ENCODE measurements at regions of chr11 and their contacts with region 1.

Region 1: GRCh38 chr11:68297812-68298658 is 14.4 kb upstream of the LRP5 start:
- DNase-seq: peak; percentile 78
- H3K4me3 Mint-ChIP-seq: no peak overlapping the region
- H3K27ac Mint-ChIP-seq: no peak overlapping the region
- H3K4me1 Mint-ChIP-seq: peaks cover 3% of the 10 kb centered on the region
- H3K27me3 Mint-ChIP-seq: peaks cover 6% of the 10 kb centered on the region

Region 2: GRCh38 chr11:68211546-68211945 is 86.5 kb before region 1 on chr11:
- CTCF ChIA-PET with region 1: interaction called, 28 read pairs
- POLR2A ChIA-PET with region 1: no interaction called
- DNase-seq: no peak
- H3K4me3 Mint-ChIP-seq: peak overlapping the region; percentile 88
- H3K27ac Mint-ChIP-seq: no peak overlapping the region
- H3K4me1 Mint-ChIP-seq: peaks cover 40% of the 10 kb centered on the region
- H3K27me3 Mint-ChIP-seq: peaks cover 18% of the 10 kb centered on the region

Region 3: GRCh38 chr11:68251765-68252164 is 46.3 kb before region 1 on chr11:
- CTCF ChIA-PET with region 1: interaction called, 117 read pairs
- POLR2A ChIA-PET with region 1: no interaction called
- DNase-seq: no peak
- H3K4me3 Mint-ChIP-seq: no peak overlapping the region
- H3K27ac Mint-ChIP-seq: no peak overlapping the region
- H3K4me1 Mint-ChIP-seq: peaks cover 2% of the 10 kb centered on the region
- H3K27me3 Mint-ChIP-seq: peaks cover 2% of the 10 kb centered on the region

Region 4: GRCh38 chr11:68257475-68258362 is 40.3 kb before region 1 on chr11:
- CTCF ChIA-PET with region 1: interaction called, 117 read pairs
- POLR2A ChIA-PET with region 1: interaction called, 5 read pairs
- DNase-seq: peak; percentile 94
- H3K4me3 Mint-ChIP-seq: no peak overlapping the region
- H3K27ac Mint-ChIP-seq: no peak overlapping the region
- H3K4me1 Mint-ChIP-seq: peaks cover 5% of the 10 kb centered on the region
- H3K27me3 Mint-ChIP-seq: no peaks in the 10 kb centered on the region

Region 5: DNA sequence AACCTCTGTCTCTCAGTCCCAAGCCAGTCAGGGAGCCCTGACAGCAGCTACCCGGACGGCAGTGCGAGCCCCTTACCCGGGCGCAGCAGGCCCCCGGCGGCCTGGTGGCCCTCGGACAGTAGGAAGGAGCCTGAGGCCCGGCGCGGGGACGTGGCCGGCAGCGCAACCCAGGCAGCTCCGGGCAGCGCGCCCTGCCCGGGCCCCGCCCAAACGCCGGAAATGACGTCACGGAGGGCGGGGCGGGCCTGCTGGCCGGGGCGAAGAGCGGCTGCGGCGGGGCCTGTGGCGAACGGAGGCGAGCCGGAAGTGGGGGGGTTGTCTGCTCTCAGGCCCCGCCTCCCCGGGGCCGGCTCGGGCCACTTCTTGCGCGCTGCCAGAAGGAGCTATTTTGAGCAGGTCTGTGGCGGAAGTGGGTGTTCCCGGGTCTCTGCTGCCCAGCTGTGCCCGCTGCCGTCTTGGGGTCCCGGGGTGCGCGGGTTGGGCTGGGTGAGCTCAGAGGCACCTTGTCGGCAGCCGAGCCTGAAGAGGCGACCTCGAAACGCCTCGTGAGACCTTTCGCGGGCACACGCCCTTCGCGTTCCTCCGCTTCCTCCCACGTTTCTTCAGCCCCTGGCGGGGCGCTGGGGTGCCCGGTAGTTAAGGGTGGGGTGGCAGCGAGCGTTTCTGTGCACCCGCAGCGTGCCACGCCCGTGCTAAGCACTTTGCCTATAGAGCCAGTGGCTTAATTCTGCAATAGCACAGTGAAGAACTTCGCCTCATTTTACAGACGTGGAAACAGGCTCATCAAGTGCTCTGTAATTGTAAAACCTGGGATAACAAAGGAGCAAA is 26.0 kb before region 1 on chr11 and contains the start of gene C11orf24:
- CTCF ChIA-PET with region 1: interaction called, 72 read pairs
- POLR2A ChIA-PET with region 1: interaction called, 42 read pairs
- DNase-seq: peak; percentile 94
- H3K4me3 Mint-ChIP-seq: peak within 1 kb of the TSS; percentile 98
- H3K27ac Mint-ChIP-seq: peak within 1 kb of the TSS; percentile 99
- H3K4me1 Mint-ChIP-seq: peaks cover 46% of the 10 kb centered on the region
- H3K27me3 Mint-ChIP-seq: no peaks in the 10 kb centered on the region
- total RNA-seq, gene C11orf24: 24.0 to 27.4 TPM

Region 6: GRCh38 chr11:68383976-68384501 is 86.0 kb after region 1 on chr11:
- CTCF ChIA-PET with region 1: interaction called, 10 read pairs
- POLR2A ChIA-PET with region 1: no interaction called
- DNase-seq: peak; percentile 67
- H3K4me3 Mint-ChIP-seq: no peak overlapping the region
- H3K27ac Mint-ChIP-seq: no peak overlapping the region
- H3K4me1 Mint-ChIP-seq: peaks cover 34% of the 10 kb centered on the region
- H3K27me3 Mint-ChIP-seq: peaks cover 2% of the 10 kb centered on the region

Measured in activated CD4-positive, alpha-beta memory T cell treated with anti-CD3 and anti-CD28 coated beads, Interleukin-2, amount 10 ng/mL, durations not matched to agents 7 days and 5 days (primary cell).